ENCODE measurements at regions of chr19 and their contacts with region 1.

Region 1: DNA sequence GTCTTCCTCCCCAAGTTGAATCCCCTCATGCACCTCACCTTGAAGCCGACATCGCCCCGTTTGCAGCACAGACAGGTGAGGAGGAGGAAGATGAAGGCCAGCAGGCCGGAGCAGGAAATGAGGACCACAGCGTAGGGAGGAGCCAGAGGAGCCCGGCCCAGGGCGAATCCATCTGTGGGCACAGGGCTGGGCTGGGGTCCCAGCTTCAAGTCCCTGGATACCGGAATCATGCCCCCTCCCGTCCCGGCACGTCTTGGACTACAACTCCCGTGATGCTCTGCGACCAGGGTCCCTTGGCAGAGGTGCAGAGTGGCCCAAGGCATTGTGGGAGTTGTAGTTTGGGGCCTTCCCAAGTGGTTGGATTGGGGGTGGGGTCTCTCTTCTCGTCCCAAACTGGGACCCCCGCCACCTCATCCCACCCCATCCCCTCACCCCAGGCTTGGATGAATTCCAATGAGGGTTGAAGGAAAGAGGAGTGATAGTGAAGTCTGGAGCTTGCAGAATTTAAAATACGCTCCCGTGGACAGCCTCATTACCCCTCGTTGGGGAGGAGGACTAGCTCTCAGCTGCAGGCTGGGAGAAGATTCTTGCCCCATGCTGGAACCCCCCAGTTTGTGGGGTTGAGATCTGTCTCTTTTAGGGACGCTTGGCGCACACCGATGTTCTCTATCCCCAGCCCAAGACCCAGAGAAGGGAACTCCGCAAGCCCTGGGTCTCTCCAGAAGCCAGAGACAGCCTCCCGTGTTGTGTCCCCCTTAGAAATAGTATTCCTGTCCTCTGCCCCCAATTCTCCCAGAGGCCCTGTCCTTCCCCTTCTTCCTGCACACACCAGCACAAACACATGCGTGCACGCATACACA is 984 bp downstream of the LMTK3 start:
- DNase-seq: peak; percentile 83
- H3K4me3 Mint-ChIP-seq: peak overlapping the region; percentile 73
- H3K27ac Mint-ChIP-seq: peak overlapping the region; percentile 66
- H3K4me1 Mint-ChIP-seq: peaks cover 23% of the 10 kb centered on the region
- H3K27me3 Mint-ChIP-seq: no peaks in the 10 kb centered on the region

Region 2: GRCh38 chr19:48461982-48462655 is 48.5 kb before region 1 on chr19:
- CTCF ChIA-PET with region 1: no interaction called
- POLR2A ChIA-PET with region 1: no interaction called
- DNase-seq: no peak
- H3K4me3 Mint-ChIP-seq: no peak overlapping the region
- H3K27ac Mint-ChIP-seq: no peak overlapping the region
- H3K4me1 Mint-ChIP-seq: no peaks in the 10 kb centered on the region
- H3K27me3 Mint-ChIP-seq: no peaks in the 10 kb centered on the region

Region 3: DNA sequence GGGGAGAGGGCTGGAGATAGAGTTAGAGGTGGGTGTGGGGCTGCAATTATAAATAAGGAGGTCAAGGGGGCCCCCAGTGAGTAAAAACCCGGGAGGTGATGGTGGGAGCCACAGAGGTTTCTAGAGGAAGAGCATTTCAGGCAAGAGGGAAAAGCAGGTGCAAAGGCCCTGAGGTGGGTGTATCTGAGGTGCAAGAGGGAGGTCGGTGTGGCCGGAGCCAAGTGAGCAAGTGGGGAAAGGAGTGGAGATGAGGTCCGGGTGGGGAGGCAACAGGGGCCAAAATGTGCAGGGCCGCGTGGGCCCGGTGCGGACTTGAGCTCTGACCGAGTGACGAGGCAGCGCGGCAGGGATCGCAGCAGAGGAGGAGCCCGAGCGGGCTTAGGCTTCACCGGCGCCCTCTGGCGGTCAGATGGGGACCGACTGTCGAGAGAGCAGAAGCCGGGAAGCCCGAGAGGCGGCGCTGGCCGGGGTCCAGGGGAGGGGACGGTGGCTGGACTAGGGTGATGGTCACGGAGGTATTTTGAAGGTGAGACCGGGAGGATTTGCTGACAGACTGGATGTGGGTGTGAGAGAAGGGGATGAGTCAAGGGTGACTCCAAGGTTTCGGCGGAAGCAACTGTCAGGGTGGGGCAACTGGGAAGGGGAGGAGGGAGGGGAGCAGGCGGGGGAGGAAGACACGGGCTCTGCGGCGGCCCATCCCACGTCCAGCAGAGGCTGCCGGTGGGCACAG is 78.2 kb after region 1 on chr19:
- CTCF ChIA-PET with region 1: interaction called, 19 read pairs
- POLR2A ChIA-PET with region 1: no interaction called
- DNase-seq: peak; percentile 90
- H3K4me3 Mint-ChIP-seq: peak overlapping the region; percentile 78
- H3K27ac Mint-ChIP-seq: peak overlapping the region; percentile 88
- H3K4me1 Mint-ChIP-seq: peaks cover 23% of the 10 kb centered on the region
- H3K27me3 Mint-ChIP-seq: no peaks in the 10 kb centered on the region

Region 4: GRCh38 chr19:48600679-48601417 is 90.2 kb after region 1 on chr19:
- CTCF ChIA-PET with region 1: interaction called, 11 read pairs
- POLR2A ChIA-PET with region 1: no interaction called
- DNase-seq: no peak
- H3K4me3 Mint-ChIP-seq: no peak overlapping the region
- H3K27ac Mint-ChIP-seq: no peak overlapping the region
- H3K4me1 Mint-ChIP-seq: peaks cover 3% of the 10 kb centered on the region
- H3K27me3 Mint-ChIP-seq: no peaks in the 10 kb centered on the region

Region 5: DNA sequence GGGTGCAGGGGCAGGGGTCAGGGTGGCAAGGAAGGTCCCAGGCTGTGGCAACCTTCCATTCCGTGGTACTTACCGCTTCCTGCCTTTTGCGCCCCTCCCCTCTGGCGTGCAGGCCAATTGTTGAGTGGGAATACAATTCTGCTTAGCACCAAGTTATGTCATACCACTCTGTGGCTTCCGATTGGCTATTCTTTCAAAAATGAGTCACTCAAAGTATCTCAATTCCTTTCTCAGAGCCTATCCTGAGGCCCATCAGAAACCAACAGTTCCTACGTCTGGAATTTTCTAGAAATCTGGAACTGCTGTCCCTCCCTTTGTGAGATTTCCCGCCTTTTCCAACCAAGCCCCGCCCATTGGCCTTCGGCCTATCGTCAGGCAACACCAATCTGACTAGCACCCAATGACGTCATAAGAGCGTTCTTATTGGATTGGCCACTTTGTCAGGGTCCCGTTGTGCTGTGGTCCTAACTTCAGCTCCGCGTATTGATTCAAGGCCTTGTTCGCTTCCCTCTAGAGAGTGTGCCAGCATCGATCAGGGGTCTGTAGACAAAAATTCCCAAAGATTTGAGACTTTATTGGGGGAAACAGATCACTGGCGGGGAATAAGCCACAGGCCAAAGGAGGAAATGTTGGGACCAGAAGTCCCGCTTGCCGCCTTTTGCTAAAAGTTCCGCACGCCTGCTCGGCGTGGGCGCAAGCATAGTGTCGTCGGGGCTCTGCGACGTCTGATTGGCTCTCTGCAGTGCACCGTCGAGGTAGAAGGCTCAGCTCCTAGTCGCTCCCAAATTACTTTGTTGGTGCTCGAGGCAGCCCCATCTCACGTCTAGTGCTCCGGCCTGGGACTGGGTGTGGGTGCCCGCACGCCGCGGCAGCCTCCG is 150.4 kb after region 1 on chr19:
- CTCF ChIA-PET with region 1: no interaction called
- POLR2A ChIA-PET with region 1: no interaction called
- DNase-seq: peak; percentile 89
- H3K4me3 Mint-ChIP-seq: peak overlapping the region; percentile 70
- H3K27ac Mint-ChIP-seq: peak overlapping the region; percentile 99
- H3K4me1 Mint-ChIP-seq: peaks cover 19% of the 10 kb centered on the region
- H3K27me3 Mint-ChIP-seq: peaks cover 6% of the 10 kb centered on the region

Measured in activated CD4-positive, alpha-beta T cell treated with anti-CD3 and anti-CD28 coated beads, Interleukin-2, amount 10 ng/mL, durations not matched to agents 7 days and 5 days (primary cell).